ENCODE measurements at regions of chr6 and their contacts with region 1.

Region 1: DNA sequence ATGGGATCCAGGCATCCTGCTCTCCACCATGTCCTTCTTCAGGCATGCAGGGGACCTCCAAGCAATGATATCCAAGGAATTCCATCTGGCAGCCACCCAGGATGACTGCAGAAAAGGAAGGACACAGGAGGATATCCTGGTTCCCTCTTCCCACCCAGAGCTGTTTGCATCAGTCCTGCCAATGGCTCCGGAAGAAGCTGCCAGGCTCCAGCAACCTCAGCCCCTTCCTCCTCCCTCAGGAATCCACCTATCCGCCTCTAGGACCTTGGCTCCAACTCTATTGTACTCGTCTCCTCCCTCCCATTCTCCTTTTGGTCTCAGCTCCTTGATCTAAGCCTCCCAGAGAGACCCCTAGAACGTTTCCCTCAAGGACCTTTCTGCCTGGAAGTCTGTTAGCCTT is 733 bp upstream of the PSORS1C2 start:
- DNase-seq: no peak
- ATAC-seq: no peak
- H3K4me3 Mint-ChIP-seq: no peak overlapping the region
- H3K27ac Mint-ChIP-seq: no peak overlapping the region
- H3K4me1 Mint-ChIP-seq: peaks cover 6% of the 10 kb centered on the region
- H3K27me3 Mint-ChIP-seq: no peaks in the 10 kb centered on the region

Region 2: GRCh38 chr6:31128093-31128676 is 11.4 kb before region 1 on chr6:
- CTCF ChIA-PET with region 1: interaction called, 15 read pairs
- POLR2A ChIA-PET with region 1: no interaction called
- intact Hi-C with region 1: no loop called
- DNase-seq: peak; percentile 85
- ATAC-seq: peak; percentile 88
- H3K4me3 Mint-ChIP-seq: no peak overlapping the region
- H3K27ac Mint-ChIP-seq: no peak overlapping the region
- H3K4me1 Mint-ChIP-seq: peaks cover 2% of the 10 kb centered on the region
- H3K27me3 Mint-ChIP-seq: peaks cover 2% of the 10 kb centered on the region

Region 3: GRCh38 chr6:31169527-31170419 is 30.2 kb after region 1 on chr6:
- CTCF ChIA-PET with region 1: no interaction called
- POLR2A ChIA-PET with region 1: no interaction called
- intact Hi-C with region 1: no loop called
- DNase-seq: no peak
- ATAC-seq: no peak
- H3K4me3 Mint-ChIP-seq: no peak overlapping the region
- H3K27ac Mint-ChIP-seq: no peak overlapping the region
- H3K4me1 Mint-ChIP-seq: peaks cover 13% of the 10 kb centered on the region
- H3K27me3 Mint-ChIP-seq: no peaks in the 10 kb centered on the region

Region 4: GRCh38 chr6:31377029-31377428 is 237.4 kb after region 1 on chr6:
- CTCF ChIA-PET with region 1: interaction called, 5 read pairs
- POLR2A ChIA-PET with region 1: interaction called, 3 read pairs
- intact Hi-C with region 1: loop called (anchors 1 to 2 kb)
- DNase-seq: no peak
- ATAC-seq: no peak
- H3K4me3 Mint-ChIP-seq: no peak overlapping the region
- H3K27ac Mint-ChIP-seq: no peak overlapping the region
- H3K4me1 Mint-ChIP-seq: peaks cover 2% of the 10 kb centered on the region
- H3K27me3 Mint-ChIP-seq: peaks cover 17% of the 10 kb centered on the region

Measured in activated CD4-positive, alpha-beta T cell treated with anti-CD3 and anti-CD28 coated beads for 36 hours (primary cell).